MCF 10A (cell line): ENCODE measurements at regions of chr1 and their contacts with region 1.

Region 1: GRCh38 chr1:40668769-40669525 is 3.5 kb upstream of the RIMS3 start:
- DNase-seq: peak; percentile 75
- H3K4me3 Mint-ChIP-seq: no peak overlapping the region
- H3K27ac Mint-ChIP-seq: no peak overlapping the region
- H3K4me1 Mint-ChIP-seq: no peaks in the 10 kb centered on the region
- H3K27me3 Mint-ChIP-seq: no peaks in the 10 kb centered on the region
- CTCF ChIP-seq: peak; percentile 87

Region 2: DNA sequence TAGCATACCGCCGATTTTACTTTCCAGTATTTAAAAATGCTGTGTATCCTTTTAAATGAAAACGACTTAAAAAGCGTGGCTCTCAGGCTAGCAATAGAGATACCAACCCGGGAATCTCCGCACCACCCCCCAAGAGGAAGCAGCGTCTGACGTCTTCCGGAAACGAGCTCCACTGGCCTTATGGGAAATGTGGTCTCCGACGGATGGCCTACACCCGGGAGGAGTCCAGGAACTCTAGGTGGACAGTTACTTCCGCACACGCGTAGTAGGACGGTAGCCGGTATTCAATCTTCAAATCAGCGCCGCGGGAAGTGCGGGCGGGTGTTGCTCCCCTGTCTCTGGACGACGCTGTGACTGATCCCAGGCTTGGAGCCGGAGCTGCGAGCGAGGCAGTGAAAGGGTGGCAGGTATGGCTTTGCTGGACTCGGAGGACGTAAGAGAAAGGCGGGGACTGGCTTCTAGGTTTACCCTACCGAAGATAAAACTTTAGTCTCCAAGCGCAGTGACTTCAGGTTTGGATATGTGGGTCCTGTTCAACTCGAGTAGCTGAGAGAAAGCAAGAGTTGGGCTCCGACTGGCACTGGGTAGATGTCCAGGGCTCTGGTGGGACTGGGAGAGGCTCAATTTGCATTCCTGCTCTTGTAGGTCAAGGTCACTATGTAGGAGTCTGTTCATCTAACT is 137.4 kb before region 1 on chr1 and contains the start of gene ZNF684:
- CTCF ChIA-PET with region 1: interaction called, 5 read pairs
- POLR2A ChIA-PET with region 1: interaction called, 4 read pairs
- intact Hi-C with region 1: loop called (anchors 5 kb)
- DNase-seq: peak; percentile 95
- H3K4me3 Mint-ChIP-seq: peak within 1 kb of the TSS; percentile 97
- H3K27ac Mint-ChIP-seq: peak within 1 kb of the TSS; percentile 85
- H3K4me1 Mint-ChIP-seq: peaks cover 23% of the 10 kb centered on the region
- H3K27me3 Mint-ChIP-seq: no peaks in the 10 kb centered on the region
- CTCF ChIP-seq: no peak
- total RNA-seq, gene ZNF684: 1.4 and 1.8 TPM in 2 replicates

Region 3: GRCh38 chr1:40625066-40625465 is 43.9 kb before region 1 on chr1:
- CTCF ChIA-PET with region 1: interaction called, 3 read pairs
- POLR2A ChIA-PET with region 1: no interaction called
- intact Hi-C with region 1: loop called (anchors 1 kb)
- DNase-seq: peak; percentile 55
- H3K4me3 Mint-ChIP-seq: no peak overlapping the region
- H3K27ac Mint-ChIP-seq: no peak overlapping the region
- H3K4me1 Mint-ChIP-seq: peaks cover 9% of the 10 kb centered on the region
- H3K27me3 Mint-ChIP-seq: peaks cover 10% of the 10 kb centered on the region
- CTCF ChIP-seq: peak; percentile 32

Region 4: GRCh38 chr1:40684669-40685068 is 15.7 kb after region 1 on chr1:
- CTCF ChIA-PET with region 1: interaction called, 26 read pairs
- POLR2A ChIA-PET with region 1: interaction called, 3 read pairs
- intact Hi-C with region 1: no loop called
- DNase-seq: no peak
- H3K4me3 Mint-ChIP-seq: no peak overlapping the region
- H3K27ac Mint-ChIP-seq: no peak overlapping the region
- H3K4me1 Mint-ChIP-seq: no peaks in the 10 kb centered on the region
- H3K27me3 Mint-ChIP-seq: no peaks in the 10 kb centered on the region
- CTCF ChIP-seq: no peak